ENCODE measurements at regions of chrX and their contacts with region 1.

Region 1: DNA sequence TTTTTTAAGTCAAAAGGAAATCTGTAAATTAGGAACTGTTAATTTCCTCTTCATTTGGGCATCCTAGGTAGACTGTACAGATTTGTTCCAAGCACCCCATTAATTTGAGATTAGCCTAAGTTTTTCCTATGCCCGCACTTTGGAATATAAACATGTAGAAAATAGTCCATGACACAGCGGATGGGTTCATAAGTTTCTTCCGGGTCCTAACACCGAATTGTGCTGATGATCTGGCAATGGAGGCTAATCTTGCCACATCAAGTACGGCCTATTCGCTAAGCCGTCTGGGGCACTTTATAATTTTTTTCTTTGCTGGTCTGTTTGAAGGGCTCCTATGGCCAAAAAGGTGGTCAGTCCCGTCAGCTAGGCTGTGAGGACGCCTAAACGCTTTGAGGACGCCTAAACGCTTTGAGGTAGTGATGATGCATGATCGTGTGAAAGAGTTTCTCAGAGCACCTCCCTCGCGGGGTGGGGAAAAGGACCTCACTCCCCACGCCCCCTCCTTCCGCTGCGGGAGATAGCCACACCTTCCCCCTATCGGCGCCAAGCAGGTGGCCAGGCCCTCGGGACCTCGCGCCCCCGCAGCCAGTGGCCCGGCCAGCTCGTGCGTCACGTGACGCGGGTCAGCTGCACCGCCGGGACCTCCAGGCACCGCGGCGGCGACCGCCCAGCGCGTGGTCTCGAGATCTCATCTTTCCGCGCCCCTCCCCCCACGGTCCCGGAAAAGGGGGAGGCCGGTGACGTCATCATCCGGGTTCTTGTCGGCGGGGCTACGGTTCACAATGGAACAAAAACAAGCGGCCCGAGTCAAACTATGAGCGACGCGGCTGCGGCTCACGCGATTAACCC is 977 bp upstream of the USP9X start:
- DNase-seq: peak; percentile 92 to 99 (median 95)
- ATAC-seq: peak; percentile 63
- H3K4me3 ChIP-seq: peak overlapping the region; percentile 86
- H3K4me3 Mint-ChIP-seq: peak overlapping the region; percentile 99
- H3K27ac ChIP-seq: peak overlapping the region; percentile 99
- H3K27ac Mint-ChIP-seq: peak overlapping the region; percentile 100
- H3K4me1 ChIP-seq: no peaks in the 10 kb centered on the region
- H3K4me1 Mint-ChIP-seq: peaks cover 22% of the 10 kb centered on the region
- H3K27me3 ChIP-seq: no peaks in the 10 kb centered on the region
- H3K27me3 Mint-ChIP-seq: no peaks in the 10 kb centered on the region
- CTCF ChIP-seq: no peak

Region 2: DNA sequence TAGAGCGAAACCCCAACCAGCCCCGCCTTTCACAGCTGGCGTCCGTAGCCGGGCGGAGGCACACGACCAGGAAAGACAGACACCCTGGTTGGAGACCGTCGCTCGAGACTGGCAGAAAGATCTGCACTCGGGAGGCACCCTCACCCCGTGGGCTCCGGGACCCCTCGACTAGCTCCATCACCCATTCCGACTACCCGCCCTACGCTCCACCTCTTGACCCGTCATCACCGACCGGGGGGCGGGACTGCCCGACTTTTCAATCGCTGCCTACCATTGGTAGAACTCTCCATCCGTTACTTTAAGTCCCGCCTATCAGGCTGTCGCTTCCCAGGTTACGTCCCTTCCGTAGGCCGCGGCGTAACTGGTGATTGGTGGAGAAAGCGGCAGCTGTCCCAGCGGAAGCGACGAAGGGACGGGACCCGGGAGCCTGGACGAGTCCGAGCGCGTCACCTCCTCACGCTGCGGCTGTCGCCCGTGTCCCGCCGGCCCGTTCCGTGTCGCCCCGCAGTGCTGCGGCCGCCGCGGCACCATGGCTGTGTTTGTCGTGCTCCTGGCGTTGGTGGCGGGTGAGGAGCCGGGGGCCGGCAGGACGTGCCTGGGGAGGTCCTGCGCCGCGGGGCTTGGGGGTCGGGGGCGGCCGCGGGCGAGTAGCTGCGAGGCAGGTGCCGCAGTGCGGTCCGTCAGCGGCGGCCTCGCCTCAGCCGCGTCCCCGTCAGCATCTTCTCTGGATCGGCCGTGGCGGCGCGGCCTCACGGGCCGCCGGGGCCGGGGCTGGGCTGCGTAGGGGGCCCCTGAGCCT is 503.5 kb before region 1 on chrX and contains the start of gene ATP6AP2:
- CTCF ChIA-PET with region 1: no interaction called
- POLR2A ChIA-PET with region 1: interaction called, 10 read pairs
- intact Hi-C with region 1: no loop called
- DNase-seq: peak; percentile 75 to 95 (median 84)
- ATAC-seq: peak; percentile 94
- H3K4me3 ChIP-seq: peak within 1 kb of the TSS; percentile 83
- H3K4me3 Mint-ChIP-seq: peak within 1 kb of the TSS; percentile 94
- H3K27ac ChIP-seq: peak within 1 kb of the TSS; percentile 79 to 89
- H3K27ac Mint-ChIP-seq: peak within 1 kb of the TSS; percentile 89
- H3K4me1 ChIP-seq: peaks cover 17% of the 10 kb centered on the region
- H3K4me1 Mint-ChIP-seq: peaks cover 32% of the 10 kb centered on the region
- H3K27me3 ChIP-seq: no peaks in the 10 kb centered on the region
- H3K27me3 Mint-ChIP-seq: no peaks in the 10 kb centered on the region
- CTCF ChIP-seq: no peak
- total RNA-seq, gene ATP6AP2: 73.8 to 78.7 TPM

Region 3: GRCh38 chrX:40755291-40756249 is 328.7 kb before region 1 on chrX:
- CTCF ChIA-PET with region 1: no interaction called
- POLR2A ChIA-PET with region 1: no interaction called
- intact Hi-C with region 1: no loop called
- DNase-seq: no peak
- ATAC-seq: no peak
- H3K4me3 ChIP-seq: no peak overlapping the region
- H3K4me3 Mint-ChIP-seq: no peak overlapping the region
- H3K27ac ChIP-seq: no peak overlapping the region
- H3K27ac Mint-ChIP-seq: no peak overlapping the region
- H3K4me1 ChIP-seq: no peaks in the 10 kb centered on the region
- H3K4me1 Mint-ChIP-seq: peaks cover 4% of the 10 kb centered on the region
- H3K27me3 ChIP-seq: no peaks in the 10 kb centered on the region
- H3K27me3 Mint-ChIP-seq: no peaks in the 10 kb centered on the region
- CTCF ChIP-seq: no peak

Region 4: DNA sequence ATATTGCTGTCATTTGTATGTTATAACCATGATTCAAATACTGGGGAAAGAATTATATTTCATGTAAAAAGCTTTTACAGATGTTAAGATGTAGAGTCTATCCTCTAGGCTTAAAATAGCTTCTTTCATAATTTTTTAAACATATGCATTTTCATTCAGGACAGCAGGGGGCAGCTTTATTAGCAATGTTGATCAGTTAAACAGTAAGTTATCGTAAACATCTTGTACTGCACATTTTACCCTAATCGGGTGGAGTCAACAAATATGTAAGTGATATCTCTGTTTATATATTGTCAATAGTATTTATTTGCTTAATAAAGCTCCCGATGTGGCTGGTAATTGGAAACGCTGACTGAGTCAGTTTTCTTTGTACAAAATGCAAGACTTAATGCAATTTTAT is 206.4 kb before region 1 on chrX:
- CTCF ChIA-PET with region 1: no interaction called
- POLR2A ChIA-PET with region 1: interaction called, 14 read pairs
- intact Hi-C with region 1: no loop called
- DNase-seq: peak in 4 of 14 experiments; percentile 27 to 60 (median 52)
- ATAC-seq: no peak
- H3K4me3 ChIP-seq: no peak overlapping the region
- H3K4me3 Mint-ChIP-seq: no peak overlapping the region
- H3K27ac ChIP-seq: no peak overlapping the region
- H3K27ac Mint-ChIP-seq: no peak overlapping the region
- H3K4me1 ChIP-seq: no peaks in the 10 kb centered on the region
- H3K4me1 Mint-ChIP-seq: no peaks in the 10 kb centered on the region
- H3K27me3 ChIP-seq: no peaks in the 10 kb centered on the region
- H3K27me3 Mint-ChIP-seq: no peaks in the 10 kb centered on the region
- CTCF ChIP-seq: peak; percentile 55

Region 5: DNA sequence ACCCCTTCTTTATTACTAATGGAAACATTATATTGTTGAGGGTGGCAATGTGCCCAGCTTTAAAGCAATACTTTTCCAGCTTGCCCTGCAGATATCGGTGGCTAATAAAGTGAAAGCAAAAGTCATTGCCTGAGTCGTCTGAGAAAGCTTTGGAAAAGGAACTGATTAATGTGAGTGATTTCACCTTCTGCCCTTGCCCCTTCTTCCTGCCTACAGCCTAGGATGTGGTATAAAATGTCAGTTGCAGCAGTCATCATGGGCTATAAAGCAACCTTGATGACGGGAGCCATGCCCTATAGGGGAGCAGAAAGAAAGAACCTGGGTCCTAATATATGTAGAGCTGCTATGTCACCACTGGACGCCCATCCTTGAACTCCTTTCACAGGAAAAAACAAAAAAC is 131.4 kb before region 1 on chrX:
- CTCF ChIA-PET with region 1: no interaction called
- POLR2A ChIA-PET with region 1: interaction called, 12 read pairs
- intact Hi-C with region 1: no loop called
- DNase-seq: peak in 4 of 14 experiments; percentile 8 to 62 (median 16)
- ATAC-seq: peak; percentile 59
- H3K4me3 ChIP-seq: peak overlapping the region; percentile 32
- H3K4me3 Mint-ChIP-seq: peak overlapping the region; percentile 76
- H3K27ac ChIP-seq: no peak overlapping the region
- H3K27ac Mint-ChIP-seq: peak overlapping the region; percentile 63
- H3K4me1 ChIP-seq: peaks cover 4% of the 10 kb centered on the region
- H3K4me1 Mint-ChIP-seq: peaks cover 15% of the 10 kb centered on the region
- H3K27me3 ChIP-seq: no peaks in the 10 kb centered on the region
- H3K27me3 Mint-ChIP-seq: no peaks in the 10 kb centered on the region
- CTCF ChIP-seq: no peak

Region 6: GRCh38 chrX:41033299-41033698 is 51.0 kb before region 1 on chrX:
- CTCF ChIA-PET with region 1: no interaction called
- POLR2A ChIA-PET with region 1: no interaction called
- intact Hi-C with region 1: no loop called
- DNase-seq: peak in 1 of 14 experiments; percentile 8
- ATAC-seq: no peak
- H3K4me3 ChIP-seq: no peak overlapping the region
- H3K4me3 Mint-ChIP-seq: no peak overlapping the region
- H3K27ac ChIP-seq: no peak overlapping the region
- H3K27ac Mint-ChIP-seq: no peak overlapping the region
- H3K4me1 ChIP-seq: no peaks in the 10 kb centered on the region
- H3K4me1 Mint-ChIP-seq: no peaks in the 10 kb centered on the region
- H3K27me3 ChIP-seq: no peaks in the 10 kb centered on the region
- H3K27me3 Mint-ChIP-seq: no peaks in the 10 kb centered on the region
- CTCF ChIP-seq: no peak

Region 7: GRCh38 chrX:41096339-41096955 is 12.2 kb after region 1 on chrX:
- CTCF ChIA-PET with region 1: no interaction called
- POLR2A ChIA-PET with region 1: interaction called, 18 read pairs
- intact Hi-C with region 1: no loop called
- DNase-seq: no peak
- ATAC-seq: no peak
- H3K4me3 ChIP-seq: no peak overlapping the region
- H3K4me3 Mint-ChIP-seq: peak overlapping the region; percentile 15
- H3K27ac ChIP-seq: no peak overlapping the region
- H3K27ac Mint-ChIP-seq: no peak overlapping the region
- H3K4me1 ChIP-seq: peaks cover 44% of the 10 kb centered on the region
- H3K4me1 Mint-ChIP-seq: peaks cover 73% of the 10 kb centered on the region
- H3K27me3 ChIP-seq: no peaks in the 10 kb centered on the region
- H3K27me3 Mint-ChIP-seq: no peaks in the 10 kb centered on the region
- CTCF ChIP-seq: no peak

Region 8: GRCh38 chrX:41116948-41117347 is 32.7 kb after region 1 on chrX:
- CTCF ChIA-PET with region 1: interaction called, 29 read pairs
- POLR2A ChIA-PET with region 1: interaction called, 48 read pairs
- intact Hi-C with region 1: loop called (anchors 1 to 2 kb)
- DNase-seq: peak in 3 of 14 experiments; percentile 51 to 76 (median 64)
- ATAC-seq: peak; percentile 62
- H3K4me3 ChIP-seq: no peak overlapping the region
- H3K4me3 Mint-ChIP-seq: peak overlapping the region; percentile 64
- H3K27ac ChIP-seq: no peak overlapping the region
- H3K27ac Mint-ChIP-seq: peak overlapping the region; percentile 80
- H3K4me1 ChIP-seq: peaks cover 31% of the 10 kb centered on the region
- H3K4me1 Mint-ChIP-seq: peaks cover 74% of the 10 kb centered on the region
- H3K27me3 ChIP-seq: no peaks in the 10 kb centered on the region
- H3K27me3 Mint-ChIP-seq: no peaks in the 10 kb centered on the region
- CTCF ChIP-seq: no peak

Region 9: DNA sequence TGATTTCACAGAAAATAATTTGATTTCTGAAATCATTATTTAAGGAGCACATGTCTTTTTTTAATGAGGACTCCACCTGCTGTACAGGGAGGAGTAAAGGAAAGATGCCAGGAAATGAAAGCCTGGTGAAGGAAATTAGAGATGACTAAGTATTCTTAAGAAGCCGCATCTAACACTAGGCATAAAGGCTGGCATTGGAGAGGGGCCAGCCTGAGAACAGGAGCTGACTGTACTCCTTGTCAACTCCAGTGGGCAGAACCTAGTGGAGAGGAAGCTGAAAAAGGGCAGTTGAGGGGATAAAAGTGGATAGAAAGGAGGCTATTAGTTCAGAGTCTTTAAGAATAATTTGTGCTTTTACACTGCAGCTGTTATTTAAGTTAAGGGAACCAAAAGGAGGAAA is 1300.7 kb after region 1 on chrX:
- CTCF ChIA-PET with region 1: no interaction called
- POLR2A ChIA-PET with region 1: no interaction called
- intact Hi-C with region 1: no loop called
- DNase-seq: no peak
- ATAC-seq: no peak
- H3K4me3 ChIP-seq: no peak overlapping the region
- H3K4me3 Mint-ChIP-seq: no peak overlapping the region
- H3K27ac ChIP-seq: no peak overlapping the region
- H3K27ac Mint-ChIP-seq: no peak overlapping the region
- H3K4me1 ChIP-seq: no peaks in the 10 kb centered on the region
- H3K4me1 Mint-ChIP-seq: no peaks in the 10 kb centered on the region
- H3K27me3 ChIP-seq: no peaks in the 10 kb centered on the region
- H3K27me3 Mint-ChIP-seq: no peaks in the 10 kb centered on the region
- CTCF ChIP-seq: no peak

Measured in CD4-positive, alpha-beta T cell (primary cell).